Dendritic cell treated with granulocyte-macrophage colony-stimulating factor and Interleukin-4, amounts not matched to agents 40 ng/mL and 50 ng/mL, for 4 days (primary cell): ENCODE measurements at regions of chr15 and their contacts with region 1.

Region 1: DNA sequence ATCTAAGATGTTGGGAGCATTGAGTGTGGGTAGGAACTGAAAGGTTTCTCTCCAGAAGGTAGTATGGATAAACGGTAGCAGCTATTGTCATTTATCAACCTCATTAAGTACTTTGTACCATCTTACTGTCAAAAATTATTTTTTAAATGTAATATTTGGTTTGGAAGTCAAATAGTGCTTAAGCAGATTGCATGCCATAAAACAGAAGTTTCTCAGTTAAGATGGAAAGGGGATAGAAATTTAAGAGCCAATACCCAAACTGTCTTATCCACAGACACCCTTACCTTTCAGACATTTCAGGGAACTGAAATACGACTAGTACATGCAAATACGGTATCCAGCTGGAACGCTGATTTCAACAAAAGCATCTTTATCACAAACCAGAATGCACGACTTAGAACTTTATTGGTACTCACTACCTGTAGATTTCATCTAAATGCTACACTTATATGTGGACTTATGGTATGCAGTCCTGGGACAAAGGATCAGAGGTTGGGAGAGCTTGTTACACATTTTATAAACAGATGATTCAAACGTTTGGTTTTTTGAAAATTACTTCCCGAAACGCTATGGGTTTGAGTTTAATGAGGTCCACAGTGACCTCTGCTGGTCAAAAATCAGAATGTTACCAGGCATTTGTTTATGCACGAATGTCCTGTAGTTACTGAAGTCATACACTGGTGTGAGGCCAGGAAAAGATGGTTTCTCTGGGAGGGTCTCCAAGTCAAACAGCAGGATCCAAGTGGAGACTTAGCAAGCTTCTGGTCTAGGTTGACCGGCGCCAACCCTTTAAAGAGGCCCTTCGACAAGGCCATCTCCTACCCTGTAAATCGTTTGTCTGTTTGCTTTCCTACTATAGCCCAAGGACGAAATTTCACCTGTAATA is 45.7 kb upstream of the DUT start:
- H3K4me3 Mint-ChIP-seq: no peak overlapping the region
- H3K27ac Mint-ChIP-seq: no peak overlapping the region
- H3K4me1 Mint-ChIP-seq: no peaks in the 10 kb centered on the region
- H3K27me3 Mint-ChIP-seq: peaks cover 2% of the 10 kb centered on the region

Region 2: DNA sequence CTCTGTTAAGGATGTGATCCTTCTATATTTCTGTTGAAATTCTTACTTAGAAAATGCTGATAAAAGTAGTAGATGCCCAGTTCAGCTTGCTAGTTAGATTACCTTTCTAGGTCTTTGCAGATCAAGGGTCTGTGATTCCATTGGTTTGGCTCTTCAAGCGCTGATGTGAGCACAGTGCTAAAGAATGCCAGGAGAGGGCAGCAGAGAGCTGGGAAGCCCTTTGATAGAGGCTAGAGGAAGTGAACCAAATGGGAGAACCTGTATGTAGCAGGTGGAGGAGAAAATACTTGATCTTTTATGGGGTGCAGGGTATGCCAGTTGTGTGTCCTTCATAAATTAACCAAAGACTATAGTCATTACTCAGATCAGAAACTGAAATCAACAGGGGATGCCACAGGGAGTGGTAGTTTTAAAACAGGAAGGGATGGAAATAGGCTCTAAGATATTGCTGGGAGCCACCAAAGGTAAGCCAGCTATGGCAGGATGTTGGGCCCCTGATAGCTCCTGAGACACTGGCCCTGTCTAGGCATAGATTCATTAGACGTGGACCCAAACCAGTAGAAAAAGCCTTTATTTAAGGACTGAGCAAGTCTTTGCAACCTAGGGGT is 1973.3 kb before region 1 on chr15:
- intact Hi-C with region 1: loop called (anchors 5 kb)
- H3K4me3 Mint-ChIP-seq: no peak overlapping the region
- H3K27ac Mint-ChIP-seq: no peak overlapping the region
- H3K4me1 Mint-ChIP-seq: no peaks in the 10 kb centered on the region
- H3K27me3 Mint-ChIP-seq: no peaks in the 10 kb centered on the region

Region 3: DNA sequence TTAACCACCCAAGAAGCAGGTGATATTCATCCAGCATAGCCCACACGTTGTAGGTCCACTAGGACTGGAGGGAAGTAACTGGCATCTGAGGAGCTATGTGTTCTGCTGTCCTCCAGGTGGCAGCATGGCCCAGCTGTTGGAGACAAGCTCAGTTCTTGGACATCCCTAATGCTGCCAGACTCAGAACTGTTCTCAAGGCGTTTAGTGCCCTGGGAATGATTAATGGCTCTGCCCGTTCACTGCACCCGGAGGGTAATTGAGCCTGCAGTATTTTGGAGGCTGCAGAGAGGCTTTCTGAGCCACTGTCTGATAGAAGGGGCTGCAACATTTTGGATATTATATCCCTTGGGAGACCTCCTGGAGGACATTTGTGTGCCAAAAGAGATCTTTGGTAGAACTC is 1089.5 kb before region 1 on chr15:
- intact Hi-C with region 1: loop called (anchors 2 kb)
- H3K4me3 Mint-ChIP-seq: no peak overlapping the region
- H3K27ac Mint-ChIP-seq: no peak overlapping the region
- H3K4me1 Mint-ChIP-seq: no peaks in the 10 kb centered on the region
- H3K27me3 Mint-ChIP-seq: peaks cover 2% of the 10 kb centered on the region

Region 4: GRCh38 chr15:47473832-47474231 is 811.7 kb before region 1 on chr15:
- intact Hi-C with region 1: loop called (anchors 5 kb)
- H3K4me3 Mint-ChIP-seq: no peak overlapping the region
- H3K27ac Mint-ChIP-seq: no peak overlapping the region
- H3K4me1 Mint-ChIP-seq: no peaks in the 10 kb centered on the region
- H3K27me3 Mint-ChIP-seq: peaks cover 6% of the 10 kb centered on the region

Region 5: DNA sequence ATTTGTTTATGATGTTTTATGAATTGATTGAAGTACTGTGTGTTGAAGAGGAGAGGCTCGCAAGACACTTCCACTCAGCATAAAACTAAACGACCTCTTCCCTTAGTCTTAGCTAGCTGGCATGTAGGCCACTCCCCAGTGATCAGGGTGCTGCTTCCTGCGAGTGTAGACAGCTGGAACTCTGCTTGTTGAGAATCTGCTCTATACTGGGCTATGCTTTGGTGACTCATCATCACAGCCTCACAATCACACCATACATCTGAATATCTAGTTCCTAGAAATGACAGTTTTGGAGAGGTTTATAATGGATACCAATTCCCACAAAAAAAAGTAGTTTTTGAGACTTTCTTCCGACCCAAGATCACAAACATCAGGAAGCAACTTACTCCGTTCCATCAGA is 166.3 kb before region 1 on chr15:
- intact Hi-C with region 1: no loop called
- H3K4me3 Mint-ChIP-seq: no peak overlapping the region
- H3K27ac Mint-ChIP-seq: no peak overlapping the region
- H3K4me1 Mint-ChIP-seq: no peaks in the 10 kb centered on the region
- H3K27me3 Mint-ChIP-seq: peaks cover 7% of the 10 kb centered on the region

Region 6: GRCh38 chr15:48352474-48353072 is 67.0 kb after region 1 on chr15:
- intact Hi-C with region 1: no loop called
- H3K4me3 Mint-ChIP-seq: no peak overlapping the region
- H3K27ac Mint-ChIP-seq: no peak overlapping the region
- H3K4me1 Mint-ChIP-seq: peaks cover 12% of the 10 kb centered on the region
- H3K27me3 Mint-ChIP-seq: no peaks in the 10 kb centered on the region